GM10248 (cell line): ENCODE measurements at regions of chr1 and their contacts with region 1.

Region 1: GRCh38 chr1:183915625-183916510 is 110.9 kb downstream of the RGL1 start:
- DNase-seq: peak; percentile 59
- CTCF ChIP-seq: peak; percentile 65

Region 2: GRCh38 chr1:183630748-183631147 is 285.1 kb before region 1 on chr1:
- CTCF ChIA-PET with region 1: interaction called, 47 read pairs
- POLR2A ChIA-PET with region 1: no interaction called
- DNase-seq: no peak
- CTCF ChIP-seq: no peak

Region 3: DNA sequence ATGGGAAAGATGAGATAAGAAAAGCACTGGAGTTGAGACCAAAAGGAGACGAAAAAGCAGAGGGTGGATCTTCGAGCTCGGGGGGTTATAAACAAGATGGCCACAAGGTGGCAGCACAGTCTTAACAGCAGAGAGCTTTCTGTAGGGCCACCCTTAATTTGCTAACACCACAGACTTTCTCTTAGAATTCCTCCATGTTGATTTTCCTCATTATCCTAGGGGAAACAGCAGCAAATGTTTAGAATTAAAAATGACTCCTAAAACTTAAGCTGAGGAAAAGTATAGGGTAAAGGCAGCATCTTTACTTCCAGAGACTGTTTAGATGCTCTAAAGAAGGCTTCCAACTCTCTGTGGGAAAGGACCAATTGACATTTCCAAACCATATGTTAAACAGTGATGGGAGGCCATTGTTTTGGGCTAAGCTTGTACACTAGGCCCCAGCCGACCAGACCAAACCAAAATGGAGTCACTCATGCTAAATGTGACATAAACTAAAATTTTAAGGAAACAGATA is 260.2 kb before region 1 on chr1:
- CTCF ChIA-PET with region 1: interaction called, 232 read pairs
- POLR2A ChIA-PET with region 1: interaction called, 3 read pairs
- DNase-seq: peak; percentile 78
- CTCF ChIP-seq: peak; percentile 69

Region 4: DNA sequence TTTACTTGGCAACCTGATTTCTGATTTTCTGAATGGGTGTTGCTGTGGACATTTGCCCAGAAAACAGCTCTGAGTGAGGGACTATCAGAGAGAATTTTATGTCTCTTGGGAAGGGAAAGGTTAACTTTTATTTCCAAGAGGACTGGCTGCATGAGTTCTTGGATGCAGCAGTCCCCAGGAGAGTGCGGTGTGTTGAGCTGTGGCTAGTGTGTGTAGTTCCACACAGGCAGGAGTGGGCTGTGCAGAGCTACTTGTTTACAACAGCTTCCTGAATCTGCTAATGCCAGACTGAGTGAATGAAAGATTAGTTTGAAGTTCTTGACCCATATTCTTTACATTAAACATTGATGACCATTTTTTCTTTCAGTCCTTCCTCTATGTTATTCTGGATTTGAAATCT is 221.8 kb before region 1 on chr1:
- CTCF ChIA-PET with region 1: interaction called, 12 read pairs
- POLR2A ChIA-PET with region 1: no interaction called
- DNase-seq: no peak
- CTCF ChIP-seq: no peak

Region 5: DNA sequence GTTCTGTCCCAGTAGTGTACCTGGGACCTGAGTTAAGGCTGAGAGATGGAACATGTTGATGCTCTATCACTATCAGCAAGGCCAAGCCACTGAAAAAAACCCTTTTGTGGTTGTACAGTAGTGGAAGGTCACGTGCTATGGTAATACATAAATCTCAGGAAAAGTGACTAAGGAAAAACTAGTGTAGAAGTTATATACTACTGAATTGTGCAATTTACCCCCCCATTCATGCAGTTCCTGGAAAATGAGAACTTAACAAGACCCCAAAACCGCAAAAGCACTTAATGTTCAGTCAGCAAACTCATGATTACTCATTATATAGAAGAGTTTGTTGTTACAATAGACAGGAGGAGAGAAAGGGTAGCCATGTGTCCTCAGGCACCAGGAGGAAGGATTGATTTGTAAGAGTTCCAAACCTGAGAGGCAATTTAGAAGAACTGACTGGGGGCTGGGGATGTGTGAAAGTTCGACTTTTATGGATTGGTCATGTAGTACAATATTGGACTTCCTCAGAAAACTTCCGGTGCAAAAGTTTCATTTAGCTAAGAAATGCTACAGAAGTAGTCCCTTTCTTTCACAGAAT is 19.3 kb before region 1 on chr1:
- CTCF ChIA-PET with region 1: interaction called, 58 read pairs
- POLR2A ChIA-PET with region 1: interaction called, 4 read pairs
- DNase-seq: no peak
- CTCF ChIP-seq: no peak